Heart right ventricle (tissue), 16 donors: ENCODE measurements at regions of chr9 and their contacts with region 1.

Region 1: DNA sequence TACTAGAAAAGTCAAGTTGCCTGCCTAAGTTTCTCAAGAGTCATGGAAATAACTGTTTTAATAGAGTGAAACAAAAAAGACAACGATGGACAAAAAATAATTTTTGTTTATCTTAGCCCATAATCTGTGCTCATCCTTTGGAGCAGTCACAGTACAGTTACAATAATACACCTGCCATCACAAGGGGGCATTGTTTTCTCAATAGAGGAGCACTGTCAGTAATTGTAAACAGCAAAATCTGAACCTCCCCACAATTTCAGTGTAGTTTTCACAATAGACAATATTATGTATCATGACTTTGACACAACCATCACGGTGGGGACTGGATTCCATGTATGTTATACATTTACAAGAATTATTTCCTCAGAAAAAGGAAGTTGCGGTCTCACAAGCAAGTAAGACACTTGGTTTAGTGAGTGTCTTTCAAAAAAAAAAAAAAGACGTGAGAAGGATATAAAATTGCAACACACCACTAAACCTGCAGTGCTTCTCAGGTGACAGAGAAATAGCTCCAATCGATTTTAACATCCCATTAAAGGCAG is 586.3 kb downstream of the PTPRD start:
- DNase-seq: no peak
- ATAC-seq: no peak
- H3K4me3 ChIP-seq: no peak overlapping the region
- H3K27ac ChIP-seq: no peak overlapping the region
- H3K4me1 ChIP-seq: no peaks in the 10 kb centered on the region
- H3K27me3 ChIP-seq: no peaks in the 10 kb centered on the region
- CTCF ChIP-seq: no peak

Region 2: DNA sequence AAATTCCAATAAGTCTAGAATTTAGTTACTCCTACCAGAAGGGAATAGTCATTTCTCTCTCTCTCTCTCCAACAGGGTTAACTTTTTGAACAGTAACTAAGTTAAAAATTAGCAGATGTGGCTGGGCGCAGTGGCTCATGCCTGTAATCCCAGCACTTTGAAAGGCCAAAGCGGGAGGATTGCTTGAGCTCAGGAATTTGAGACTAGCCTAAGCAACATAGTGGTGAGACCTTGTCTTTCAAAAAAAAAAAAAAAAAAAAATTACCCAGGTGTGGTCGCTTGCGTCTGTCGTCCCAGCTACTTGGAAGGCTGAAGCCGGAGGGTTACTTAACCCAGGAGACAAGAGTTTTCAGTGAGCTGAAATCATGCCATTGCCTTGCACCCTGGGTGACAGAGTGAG is 53.5 kb before region 1 on chr9:
- intact Hi-C with region 1: no loop called
- DNase-seq: no peak
- ATAC-seq: no peak
- H3K4me3 ChIP-seq: no peak overlapping the region
- H3K27ac ChIP-seq: no peak overlapping the region
- H3K4me1 ChIP-seq: no peaks in the 10 kb centered on the region
- H3K27me3 ChIP-seq: no peaks in the 10 kb centered on the region
- CTCF ChIP-seq: no peak

Region 3: DNA sequence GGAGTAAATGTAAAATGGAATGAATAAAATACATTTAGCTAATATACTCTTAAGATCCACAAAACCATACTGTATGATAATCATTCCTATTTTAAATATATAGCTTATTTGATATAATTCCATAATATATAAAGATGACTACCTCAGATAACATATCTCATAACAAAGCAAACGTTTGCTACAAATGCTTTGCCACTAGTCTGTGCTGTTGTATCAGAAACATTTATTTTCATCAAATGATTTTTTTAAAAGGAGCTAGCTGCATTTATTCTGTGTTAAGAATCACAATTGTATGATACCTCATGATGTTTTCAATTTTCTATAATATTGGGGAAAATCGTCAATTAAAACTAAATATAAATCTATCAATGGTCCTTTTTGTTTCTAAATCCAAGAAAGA is 19.1 kb after region 1 on chr9:
- intact Hi-C with region 1: no loop called
- DNase-seq: no peak
- ATAC-seq: no peak
- H3K4me3 ChIP-seq: no peak overlapping the region
- H3K27ac ChIP-seq: no peak overlapping the region
- H3K4me1 ChIP-seq: no peaks in the 10 kb centered on the region
- H3K27me3 ChIP-seq: no peaks in the 10 kb centered on the region
- CTCF ChIP-seq: peak in 7 of 9 donors; percentile 31 to 60 (median 44)

Region 4: DNA sequence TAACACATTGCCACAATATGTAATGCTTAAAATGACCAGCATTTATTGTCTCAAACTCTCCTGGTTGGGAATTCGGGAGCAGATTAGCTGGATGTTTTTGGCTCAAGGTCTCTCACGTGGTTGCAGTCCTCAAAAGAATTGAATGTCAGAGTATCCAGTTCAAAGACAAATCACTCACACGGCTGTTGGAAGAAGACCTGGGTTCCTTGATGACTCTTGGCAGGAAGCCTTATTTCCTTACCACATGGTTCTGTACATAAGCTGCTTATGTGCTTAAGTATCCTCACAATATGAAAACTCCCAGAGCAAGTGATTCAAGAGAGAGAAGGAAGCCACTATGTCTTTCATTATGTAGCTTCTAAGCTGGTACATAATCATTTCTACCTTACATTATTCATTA is 816.6 kb after region 1 on chr9:
- intact Hi-C with region 1: loop called in 1 of 10 experiments (anchors 10 kb)
- DNase-seq: no peak
- ATAC-seq: no peak
- H3K4me3 ChIP-seq: no peak overlapping the region
- H3K27ac ChIP-seq: no peak overlapping the region
- H3K4me1 ChIP-seq: no peaks in the 10 kb centered on the region
- H3K27me3 ChIP-seq: no peaks in the 10 kb centered on the region
- CTCF ChIP-seq: no peak